MCF 10A (cell line): ENCODE measurements at regions of chr11 and their contacts with region 1.

Region 1: DNA sequence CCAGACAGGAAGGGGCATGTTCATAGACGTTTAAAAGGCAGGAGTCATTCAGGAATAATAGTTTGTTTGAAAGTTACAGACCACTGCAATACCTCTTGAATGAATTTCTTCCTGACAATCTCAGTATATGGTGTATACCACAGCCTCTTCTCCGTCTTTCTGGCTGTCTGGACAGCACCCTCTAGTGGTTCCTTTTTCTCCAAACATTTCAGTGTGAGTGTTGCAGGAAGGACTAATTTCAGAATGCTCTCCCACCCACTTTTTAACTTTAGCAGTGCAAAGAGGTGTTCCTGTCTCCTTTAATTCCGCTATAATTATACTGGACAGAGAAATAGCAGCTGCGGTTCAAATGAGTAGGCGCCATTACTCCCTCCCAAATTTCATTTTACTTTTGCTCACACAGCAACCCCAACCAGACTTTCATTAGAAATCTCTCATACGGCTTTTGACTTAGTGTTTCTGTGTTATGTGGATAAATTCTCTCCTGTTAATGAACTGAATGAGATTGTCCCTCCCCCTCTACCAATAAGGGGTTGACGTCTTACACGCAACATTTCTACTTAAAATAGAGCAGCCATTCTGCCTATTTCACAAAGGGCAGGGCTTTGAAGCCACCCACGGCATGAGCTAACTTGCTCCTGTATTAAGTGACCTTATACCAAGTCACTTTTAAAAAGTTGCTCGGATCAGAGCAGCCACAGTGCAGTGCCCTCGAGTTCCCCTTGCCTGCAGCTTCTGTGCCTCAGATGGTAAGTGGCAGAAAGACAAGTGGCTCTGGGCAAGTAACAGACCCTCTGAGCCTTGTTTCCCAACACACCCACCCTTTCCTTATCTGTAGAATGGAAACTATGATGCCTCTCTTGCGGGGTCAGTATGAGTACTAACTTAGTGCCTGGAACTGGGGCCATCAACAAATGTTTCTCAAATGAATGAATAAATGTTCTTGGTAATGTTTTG is 368.6 kb downstream of the OPCML start:
- DNase-seq: no peak
- H3K4me3 Mint-ChIP-seq: no peak overlapping the region
- H3K27ac Mint-ChIP-seq: no peak overlapping the region
- H3K4me1 Mint-ChIP-seq: no peaks in the 10 kb centered on the region
- H3K27me3 Mint-ChIP-seq: no peaks in the 10 kb centered on the region
- CTCF ChIP-seq: peak; percentile 30

Region 2: DNA sequence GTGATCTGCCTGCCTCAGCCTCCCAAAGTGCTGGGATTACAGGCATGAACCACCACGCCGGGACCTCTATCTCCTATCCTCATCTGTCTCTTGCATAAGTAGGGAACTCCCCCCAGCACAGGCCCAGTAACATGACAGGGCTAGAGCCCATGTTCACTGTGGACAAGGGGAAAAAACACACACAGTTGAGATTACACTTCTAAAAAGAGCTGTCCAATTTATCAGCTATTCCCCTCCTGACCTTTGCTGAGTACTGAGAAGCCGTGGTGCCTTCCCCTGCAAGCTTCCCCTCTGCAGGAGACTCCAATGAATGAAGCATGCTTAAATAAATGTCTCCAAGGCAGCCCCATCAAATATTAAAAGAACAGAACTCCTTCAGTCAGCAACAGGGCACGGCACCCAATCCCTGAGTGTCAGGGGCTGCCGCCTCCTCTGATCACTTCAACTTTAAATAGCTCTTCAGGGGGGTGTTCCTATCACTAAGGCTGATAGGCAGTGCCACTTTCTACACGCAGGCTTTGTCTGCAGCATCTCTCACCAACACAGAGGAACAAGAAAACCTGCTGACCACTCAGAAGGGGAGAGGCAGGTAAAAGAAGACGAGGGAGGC is 16.9 kb before region 1 on chr11:
- CTCF ChIA-PET with region 1: interaction called, 19 read pairs
- POLR2A ChIA-PET with region 1: no interaction called
- intact Hi-C with region 1: no loop called
- DNase-seq: no peak
- H3K4me3 Mint-ChIP-seq: no peak overlapping the region
- H3K27ac Mint-ChIP-seq: no peak overlapping the region
- H3K4me1 Mint-ChIP-seq: no peaks in the 10 kb centered on the region
- H3K27me3 Mint-ChIP-seq: peaks cover 15% of the 10 kb centered on the region
- CTCF ChIP-seq: no peak